ENCODE measurements at regions of chr2 and their contacts with region 1.

Region 1: DNA sequence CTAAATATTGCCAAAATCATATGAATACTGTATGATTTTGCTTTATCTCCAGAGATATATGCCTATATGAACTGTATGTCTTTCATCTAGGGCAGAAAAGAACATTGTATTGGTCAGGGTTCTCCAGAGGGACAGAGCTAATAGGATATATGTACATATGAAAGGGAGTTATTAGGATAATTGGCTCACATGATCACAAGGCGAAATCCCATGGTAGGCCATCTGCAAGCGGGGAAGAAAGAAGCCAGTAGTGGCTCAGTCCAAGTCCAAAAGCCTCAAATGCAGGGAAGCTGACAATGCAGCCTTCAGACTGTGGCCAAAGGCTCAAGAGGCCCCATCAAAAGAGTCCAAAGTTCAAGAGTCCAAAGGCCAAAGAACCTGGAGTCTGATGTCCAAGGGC is 209.9 kb downstream of the RNF144A start:
- DNase-seq: no peak
- H3K4me3 ChIP-seq: no peak overlapping the region
- H3K27ac ChIP-seq: no peak overlapping the region
- H3K4me1 ChIP-seq: no peaks in the 10 kb centered on the region
- H3K27me3 ChIP-seq: no peaks in the 10 kb centered on the region
- CTCF ChIP-seq: no peak
- POLR2A ChIP-seq: no peak

Region 2: DNA sequence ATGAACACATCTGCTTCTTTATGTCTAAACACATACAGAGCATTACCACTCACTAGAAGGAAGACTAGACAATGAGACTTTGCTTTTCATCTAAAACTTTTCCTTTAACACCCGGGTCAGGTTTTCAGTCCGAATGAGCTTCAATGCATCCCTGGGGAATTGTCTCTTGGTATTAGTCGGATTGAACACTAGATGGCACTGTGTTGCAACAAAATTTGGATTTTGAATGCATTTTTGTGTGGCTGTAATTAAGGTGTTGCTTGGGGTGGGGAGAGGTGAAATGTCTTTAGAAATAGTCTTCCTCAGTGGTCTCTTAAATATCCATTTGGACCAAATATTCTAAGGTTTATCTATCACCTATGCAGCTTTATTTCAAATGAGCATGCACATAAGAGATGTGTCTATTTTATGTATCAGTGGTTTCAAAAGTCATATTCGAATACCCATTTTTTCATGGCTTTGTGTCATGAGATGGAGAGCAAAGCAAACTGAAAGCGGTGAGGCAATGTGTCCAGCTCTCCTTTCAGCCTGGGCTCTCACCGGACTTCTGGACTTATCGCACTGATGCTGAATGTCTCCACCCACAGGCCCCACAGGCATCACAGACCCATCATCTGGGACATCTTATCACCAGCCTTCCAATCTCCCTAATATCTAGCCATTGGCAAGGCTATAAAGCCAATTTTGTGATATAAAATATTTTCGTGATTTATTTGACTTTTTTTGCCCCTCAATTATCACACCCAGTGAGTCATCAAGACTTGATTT is 300.3 kb after region 1 on chr2:
- intact Hi-C with region 1: loop called (anchors 10 kb)
- DNase-seq: no peak
- H3K4me3 ChIP-seq: no peak overlapping the region
- H3K27ac ChIP-seq: no peak overlapping the region
- H3K4me1 ChIP-seq: no peaks in the 10 kb centered on the region
- H3K27me3 ChIP-seq: no peaks in the 10 kb centered on the region
- CTCF ChIP-seq: peak; percentile 43 to 73 (median 66)
- POLR2A ChIP-seq: no peak

Measured in prostate gland (tissue), 2 donors.